ENCODE measurements at regions of chr12 and their contacts with region 1.

Region 1: GRCh38 chr12:54032627-54033100 is at the start of gene HOXC5:
- DNase-seq: peak; percentile 90
- H3K4me3 Mint-ChIP-seq: peak within 1 kb of the TSS; percentile 69
- H3K27ac Mint-ChIP-seq: peak within 1 kb of the TSS; percentile 59
- H3K4me1 Mint-ChIP-seq: peaks cover 19% of the 10 kb centered on the region
- H3K27me3 Mint-ChIP-seq: peaks cover 83% of the 10 kb centered on the region
- total RNA-seq, gene HOXC5: not detected in 2 replicates

Region 2: DNA sequence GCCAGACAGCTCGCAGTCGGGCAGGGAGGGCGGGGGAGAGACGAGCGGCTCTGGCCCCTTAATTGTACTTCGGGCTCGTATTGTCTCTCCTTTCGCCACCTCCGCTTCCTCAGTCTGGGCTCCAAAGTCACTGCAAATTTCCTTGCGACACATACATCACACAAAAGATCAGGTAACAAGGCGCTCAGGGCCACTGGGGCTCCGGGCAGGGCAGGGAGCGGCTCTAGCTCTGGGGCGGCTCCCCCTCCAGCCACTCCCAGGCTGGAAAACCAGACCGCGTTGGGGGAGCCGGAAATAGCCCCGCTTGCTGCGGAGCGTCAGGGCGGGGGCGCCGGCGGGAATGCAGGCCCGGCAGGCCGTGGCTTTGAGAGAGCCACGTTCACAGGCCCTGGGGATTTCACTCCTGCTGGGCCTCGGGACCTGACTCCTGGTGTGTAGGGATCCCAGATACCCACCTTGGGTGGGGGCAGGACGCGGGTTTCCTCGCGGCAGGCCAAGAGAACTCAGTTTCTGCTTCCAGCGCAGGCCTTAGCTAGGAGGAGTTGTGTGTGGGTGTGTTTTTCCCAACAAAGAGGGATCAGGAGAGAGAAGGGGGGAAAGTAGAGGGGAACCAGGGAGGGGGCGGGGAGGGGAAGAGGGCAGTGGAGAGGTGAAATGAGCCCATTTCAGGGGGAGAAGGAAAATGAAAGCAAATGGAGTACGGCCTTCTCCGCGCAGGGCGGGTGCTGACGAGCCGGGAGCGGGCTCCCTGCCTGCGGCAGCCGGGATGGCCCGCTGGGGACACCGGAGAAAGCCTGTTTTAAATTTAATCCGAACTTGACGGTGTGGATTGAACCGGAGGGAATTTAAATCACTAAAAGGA is 37.1 kb before region 1 on chr12:
- intact Hi-C with region 1: loop called (anchors 5 kb)
- DNase-seq: peak; percentile 74
- H3K4me3 Mint-ChIP-seq: peak overlapping the region; percentile 75
- H3K27ac Mint-ChIP-seq: no peak overlapping the region
- H3K4me1 Mint-ChIP-seq: peaks cover 18% of the 10 kb centered on the region
- H3K27me3 Mint-ChIP-seq: peaks cover 87% of the 10 kb centered on the region

Region 3: GRCh38 chr12:54047160-54047963 is 14.7 kb after region 1 on chr12:
- intact Hi-C with region 1: loop called (anchors 2 kb)
- DNase-seq: no peak
- H3K4me3 Mint-ChIP-seq: no peak overlapping the region
- H3K27ac Mint-ChIP-seq: no peak overlapping the region
- H3K4me1 Mint-ChIP-seq: peaks cover 15% of the 10 kb centered on the region
- H3K27me3 Mint-ChIP-seq: peaks cover 98% of the 10 kb centered on the region